ENCODE measurements at regions of chr12 and their contacts with region 1.

Region 1: GRCh38 chr12:66107451-66107915 is 23.1 kb downstream of the LLPH start:
- DNase-seq: peak; percentile 56
- ATAC-seq: peak; percentile 97
- H3K4me3 ChIP-seq: no peak overlapping the region
- H3K27ac ChIP-seq: no peak overlapping the region
- H3K4me1 ChIP-seq: no peaks in the 10 kb centered on the region
- H3K27me3 ChIP-seq: no peaks in the 10 kb centered on the region
- CTCF ChIP-seq: peak; percentile 67 to 83 (median 75)
- EP300 ChIP-seq: no peak
- POLR2A ChIP-seq: no peak
- RAD21 ChIP-seq: peak; percentile 90

Region 2: GRCh38 chr12:65306366-65307168 is 800.9 kb before region 1 on chr12:
- CTCF ChIA-PET with region 1: interaction called, 5 read pairs
- POLR2A ChIA-PET with region 1: no interaction called
- RAD21 ChIA-PET with region 1: no interaction called
- SMC1A ChIA-PET with region 1: no interaction called
- in situ Hi-C with region 1: loop called (anchors 10 kb)
- intact Hi-C with region 1: no loop called
- DNase-seq: no peak
- ATAC-seq: peak; percentile 76
- H3K4me3 ChIP-seq: no peak overlapping the region
- H3K27ac ChIP-seq: no peak overlapping the region
- H3K4me1 ChIP-seq: no peaks in the 10 kb centered on the region
- H3K27me3 ChIP-seq: no peaks in the 10 kb centered on the region
- CTCF ChIP-seq: peak; percentile 46 to 60 (median 56)
- EP300 ChIP-seq: no peak
- POLR2A ChIP-seq: no peak
- RAD21 ChIP-seq: peak; percentile 70

Region 3: DNA sequence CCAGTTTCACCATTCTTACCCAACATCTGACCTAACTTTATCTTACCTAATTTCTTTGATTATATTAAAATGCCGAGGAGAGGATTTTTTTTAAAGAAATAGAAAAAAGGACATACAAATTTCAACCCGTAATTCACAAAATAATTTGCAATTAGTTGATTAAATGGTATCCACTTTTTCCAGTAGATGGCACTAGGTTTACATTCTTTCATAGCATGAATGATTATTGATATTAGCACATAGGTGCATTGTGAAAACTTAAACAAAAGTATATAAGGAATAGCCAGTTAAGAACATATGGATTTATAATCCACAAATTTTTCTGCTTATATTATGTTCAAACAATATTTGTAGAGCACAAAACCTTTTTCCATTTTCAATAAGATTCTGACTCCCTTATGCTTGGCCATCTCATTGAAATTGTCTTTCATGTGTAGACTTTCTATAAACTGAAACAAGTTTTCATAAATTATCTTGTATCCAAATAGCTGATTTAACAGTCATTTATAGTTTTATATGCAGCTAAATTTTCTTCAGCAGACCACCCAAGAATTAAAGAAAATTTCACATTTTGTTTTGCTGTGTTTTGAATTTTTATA is 793.7 kb before region 1 on chr12:
- CTCF ChIA-PET with region 1: interaction called, 4 read pairs
- POLR2A ChIA-PET with region 1: no interaction called
- RAD21 ChIA-PET with region 1: no interaction called
- SMC1A ChIA-PET with region 1: no interaction called
- in situ Hi-C with region 1: loop called (anchors 10 kb)
- intact Hi-C with region 1: loop called (anchors 2 kb)
- DNase-seq: no peak
- ATAC-seq: no peak
- H3K4me3 ChIP-seq: no peak overlapping the region
- H3K27ac ChIP-seq: no peak overlapping the region
- H3K4me1 ChIP-seq: no peaks in the 10 kb centered on the region
- H3K27me3 ChIP-seq: no peaks in the 10 kb centered on the region
- CTCF ChIP-seq: peak in 2 of 3 experiments; percentile 20 to 32; a peak in 3 of 6 replicates
- EP300 ChIP-seq: no peak
- POLR2A ChIP-seq: no peak
- RAD21 ChIP-seq: peak; percentile 62

Region 4: DNA sequence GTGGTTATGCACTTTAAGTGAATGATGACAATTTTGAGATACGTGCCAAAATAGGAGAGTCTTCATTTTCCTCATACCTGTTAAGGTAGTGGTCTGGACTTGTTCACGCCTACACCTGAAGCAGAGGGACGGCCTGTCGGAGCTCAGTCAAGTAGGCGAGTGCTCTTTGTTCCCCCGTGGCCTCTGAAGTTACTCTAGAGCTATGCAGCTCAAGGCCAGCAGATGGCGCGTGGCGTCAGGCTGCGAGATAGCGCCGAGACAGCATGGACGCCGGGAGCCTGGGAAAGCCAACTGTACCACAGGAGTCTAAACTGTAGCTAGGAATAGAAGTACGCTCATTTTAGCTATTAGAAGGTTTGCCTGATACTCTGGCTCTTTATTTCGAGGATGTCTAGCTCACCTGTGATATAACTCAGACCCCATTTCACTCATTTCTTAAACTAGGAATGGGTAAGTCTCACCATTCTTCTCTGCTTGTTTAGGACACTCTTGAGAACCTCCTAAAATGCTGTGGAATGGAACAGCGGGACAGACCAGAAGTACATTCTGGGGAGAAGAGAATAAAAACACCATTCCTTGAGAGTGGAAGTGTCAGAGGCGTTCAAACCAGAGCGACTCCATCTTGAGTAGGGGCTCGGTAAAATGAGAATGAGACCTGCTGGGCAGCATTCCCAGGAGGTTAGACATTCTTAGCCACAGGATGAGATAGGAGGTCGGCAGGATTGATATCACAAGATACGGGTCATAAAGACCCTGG is 550.6 kb before region 1 on chr12:
- CTCF ChIA-PET with region 1: interaction called, 13 read pairs
- POLR2A ChIA-PET with region 1: no interaction called
- RAD21 ChIA-PET with region 1: interaction called, 6 read pairs
- SMC1A ChIA-PET with region 1: interaction called, 6 read pairs
- in situ Hi-C with region 1: loop called (anchors 5 kb)
- intact Hi-C with region 1: loop called (anchors 1 kb)
- DNase-seq: peak; percentile 9
- ATAC-seq: peak; percentile 100
- H3K4me3 ChIP-seq: no peak overlapping the region
- H3K27ac ChIP-seq: no peak overlapping the region
- H3K4me1 ChIP-seq: no peaks in the 10 kb centered on the region
- H3K27me3 ChIP-seq: no peaks in the 10 kb centered on the region
- CTCF ChIP-seq: peak; percentile 91 to 95 (median 94); a peak in 5 of 6 replicates
- EP300 ChIP-seq: no peak
- POLR2A ChIP-seq: no peak
- RAD21 ChIP-seq: peak; percentile 96

Region 5: GRCh38 chr12:65602610-65603295 is 504.7 kb before region 1 on chr12:
- CTCF ChIA-PET with region 1: interaction called, 37 read pairs
- POLR2A ChIA-PET with region 1: interaction called, 3 read pairs
- RAD21 ChIA-PET with region 1: interaction called, 22 read pairs
- SMC1A ChIA-PET with region 1: interaction called, 7 read pairs
- in situ Hi-C with region 1: no loop called
- intact Hi-C with region 1: loop called (anchors 1 kb)
- DNase-seq: no peak
- ATAC-seq: peak; percentile 94
- H3K4me3 ChIP-seq: no peak overlapping the region
- H3K27ac ChIP-seq: no peak overlapping the region
- H3K4me1 ChIP-seq: no peaks in the 10 kb centered on the region
- H3K27me3 ChIP-seq: peaks cover 0 to 3% of the 10 kb centered on the region in 2 experiments; a peak in 1 of 4 replicates
- CTCF ChIP-seq: peak; percentile 68 to 73 (median 70)
- EP300 ChIP-seq: no peak
- POLR2A ChIP-seq: no peak
- RAD21 ChIP-seq: peak; percentile 90

Region 6: DNA sequence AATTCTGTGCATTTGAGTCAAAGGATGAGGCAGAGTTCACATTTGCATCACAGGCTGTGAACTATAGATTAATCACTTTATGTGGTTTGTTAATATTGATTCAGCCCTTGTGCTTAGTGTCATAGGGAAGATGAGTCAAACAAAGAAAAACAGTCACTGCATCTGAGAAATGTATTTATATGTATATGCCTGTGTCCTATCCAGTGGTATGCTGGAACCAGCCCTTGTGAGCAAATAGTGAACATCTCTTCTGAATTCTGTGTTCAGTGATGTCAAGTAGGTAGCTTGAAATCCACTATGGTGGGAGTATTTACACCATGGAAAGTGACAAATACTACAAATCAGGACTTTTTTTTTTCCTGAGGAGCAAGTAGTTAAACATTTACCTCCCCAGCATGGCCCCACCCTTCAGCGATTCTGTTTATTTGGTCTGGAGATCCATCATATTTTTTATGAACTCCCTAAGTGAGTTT is 154.7 kb before region 1 on chr12:
- CTCF ChIA-PET with region 1: interaction called, 4 read pairs
- POLR2A ChIA-PET with region 1: no interaction called
- RAD21 ChIA-PET with region 1: no interaction called
- SMC1A ChIA-PET with region 1: no interaction called
- in situ Hi-C with region 1: no loop called
- intact Hi-C with region 1: loop called (anchors 5 kb)
- DNase-seq: no peak
- ATAC-seq: peak; percentile 72
- H3K4me3 ChIP-seq: no peak overlapping the region
- H3K27ac ChIP-seq: no peak overlapping the region
- H3K4me1 ChIP-seq: peaks cover 4% of the 10 kb centered on the region
- H3K27me3 ChIP-seq: no peaks in the 10 kb centered on the region
- CTCF ChIP-seq: no peak
- EP300 ChIP-seq: no peak
- POLR2A ChIP-seq: no peak
- RAD21 ChIP-seq: no peak

Region 7: GRCh38 chr12:66119870-66120241 is 12.4 kb after region 1 on chr12:
- CTCF ChIA-PET with region 1: interaction called, 10 read pairs
- POLR2A ChIA-PET with region 1: no interaction called
- RAD21 ChIA-PET with region 1: interaction called, 3 read pairs
- SMC1A ChIA-PET with region 1: no interaction called
- in situ Hi-C with region 1: no loop called
- intact Hi-C with region 1: no loop called
- DNase-seq: no peak
- ATAC-seq: peak; percentile 73
- H3K4me3 ChIP-seq: no peak overlapping the region
- H3K27ac ChIP-seq: no peak overlapping the region
- H3K4me1 ChIP-seq: peaks cover 9% of the 10 kb centered on the region
- H3K27me3 ChIP-seq: no peaks in the 10 kb centered on the region
- CTCF ChIP-seq: no peak
- EP300 ChIP-seq: no peak
- POLR2A ChIP-seq: no peak
- RAD21 ChIP-seq: no peak

Region 8: GRCh38 chr12:66144791-66145754 is 37.6 kb after region 1 on chr12:
- CTCF ChIA-PET with region 1: no interaction called
- POLR2A ChIA-PET with region 1: no interaction called
- RAD21 ChIA-PET with region 1: no interaction called
- SMC1A ChIA-PET with region 1: no interaction called
- in situ Hi-C with region 1: no loop called
- intact Hi-C with region 1: no loop called
- DNase-seq: no peak
- ATAC-seq: peak; percentile 64
- H3K4me3 ChIP-seq: no peak overlapping the region
- H3K27ac ChIP-seq: no peak overlapping the region
- H3K4me1 ChIP-seq: no peaks in the 10 kb centered on the region
- H3K27me3 ChIP-seq: no peaks in the 10 kb centered on the region
- CTCF ChIP-seq: peak; percentile 9 to 59 (median 17); a peak in 2 of 6 replicates
- EP300 ChIP-seq: no peak
- POLR2A ChIP-seq: no peak
- RAD21 ChIP-seq: 0 out of 2 replicates have a peak, but pooled peaks have one; percentile 30

Measured in GM12878 (cell line).